ENCODE measurements at regions of chr2 and their contacts with region 1.

Region 1: DNA sequence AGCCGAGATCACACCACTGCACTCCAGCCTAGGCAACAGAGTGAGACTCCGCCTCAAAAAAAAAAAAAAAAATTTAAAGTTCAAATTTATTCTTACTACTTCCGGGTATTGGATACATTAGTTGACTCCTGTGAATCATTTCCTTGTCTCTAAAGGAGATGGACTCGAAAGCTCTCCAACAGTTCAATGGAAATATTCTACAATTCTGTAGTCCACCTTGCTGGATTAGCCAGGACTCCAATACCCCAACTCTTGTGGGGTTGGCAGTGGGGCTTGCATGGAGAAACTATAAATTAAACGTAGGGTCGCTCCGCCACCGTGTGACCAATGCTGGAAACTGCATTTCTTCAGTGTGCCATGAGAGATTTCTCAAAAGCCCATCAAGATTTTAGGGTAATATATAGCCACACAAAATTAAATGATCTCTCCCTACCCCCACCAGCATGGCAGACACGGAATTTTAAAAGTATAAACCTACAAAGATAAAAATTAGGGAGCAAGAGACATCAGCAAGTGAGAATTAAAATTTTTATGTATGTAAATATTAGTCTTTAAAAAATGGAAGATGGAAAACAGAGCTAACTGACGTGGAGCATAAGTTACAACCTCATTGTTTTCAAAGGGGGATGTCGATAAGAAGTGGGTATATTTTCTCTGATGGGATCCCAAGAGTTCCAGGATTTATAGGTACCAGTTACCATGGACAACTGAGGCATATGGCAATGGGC is 27.8 kb upstream of the GAREM2 start:
- DNase-seq: peak; percentile 13 to 76 (median 51)
- ATAC-seq: peak; percentile 53 to 78 (median 64)
- H3K4me3 ChIP-seq: no peak overlapping the region
- H3K4me3 Mint-ChIP-seq: no peak overlapping the region
- H3K27ac ChIP-seq: no peak overlapping the region
- H3K27ac Mint-ChIP-seq: no peak overlapping the region
- H3K4me1 ChIP-seq: no peaks in the 10 kb centered on the region
- H3K4me1 Mint-ChIP-seq: peaks cover 0 to 4% (median 2%) of the 10 kb centered on the region in 3 donors
- H3K27me3 ChIP-seq: peaks cover 0 to 12% of the 10 kb centered on the region in 2 experiments
- H3K27me3 Mint-ChIP-seq: peaks cover 10 to 11% of the 10 kb centered on the region in 2 donors

Region 2: GRCh38 chr2:26114151-26114550 is 31.0 kb before region 1 on chr2:
- CTCF ChIA-PET with region 1: no interaction called
- POLR2A ChIA-PET with region 1: no interaction called
- DNase-seq: no peak
- ATAC-seq: no peak
- H3K4me3 ChIP-seq: no peak overlapping the region
- H3K4me3 Mint-ChIP-seq: no peak overlapping the region
- H3K27ac ChIP-seq: no peak overlapping the region
- H3K27ac Mint-ChIP-seq: peak overlapping the region; percentile 28 to 48
- H3K4me1 ChIP-seq: no peaks in the 10 kb centered on the region
- H3K4me1 Mint-ChIP-seq: peaks cover 19 to 30% (median 21%) of the 10 kb centered on the region in 3 donors
- H3K27me3 ChIP-seq: no peaks in the 10 kb centered on the region
- H3K27me3 Mint-ChIP-seq: no peaks in the 10 kb centered on the region

Region 3: DNA sequence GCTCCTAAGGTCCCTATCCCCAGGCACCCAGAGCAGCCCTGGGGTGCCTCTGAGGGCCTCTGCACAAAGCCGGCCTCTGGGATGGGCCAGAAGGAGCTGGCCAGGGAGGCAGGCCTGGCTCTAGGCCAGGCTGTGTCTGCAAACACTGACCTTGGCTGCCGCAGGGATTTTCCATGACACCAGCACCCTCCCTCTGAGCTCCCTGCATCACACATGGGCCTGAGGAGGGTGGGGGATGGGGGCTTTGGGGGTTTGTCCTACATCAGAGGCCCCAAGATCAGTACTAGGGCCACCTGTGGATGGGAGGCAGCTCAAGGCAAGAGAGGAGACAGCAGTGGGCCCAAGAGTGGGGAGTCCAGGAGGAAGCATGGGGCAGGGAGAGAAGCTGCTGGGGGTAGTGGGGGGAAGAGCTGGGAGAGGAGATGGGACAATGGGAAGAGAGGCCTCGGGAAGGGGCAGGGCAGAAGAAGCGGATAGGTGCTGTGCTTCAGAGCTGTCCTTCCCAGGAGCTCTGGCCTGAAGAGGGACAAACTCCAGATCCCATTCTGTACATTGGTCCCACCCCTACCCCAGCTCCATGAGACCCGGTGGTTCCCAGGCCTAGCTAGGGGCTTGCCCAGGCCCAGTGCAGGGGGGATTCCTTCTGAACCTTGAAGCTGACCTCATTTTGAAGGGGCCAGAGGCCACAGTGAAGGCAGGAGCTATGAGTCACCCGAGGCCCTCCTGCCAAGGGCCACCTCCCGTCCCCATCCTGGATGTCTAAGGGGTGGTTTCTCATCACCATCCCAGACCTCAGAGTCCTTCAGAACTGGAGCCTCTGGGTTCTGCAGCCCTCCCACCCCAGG is 575.4 kb after region 1 on chr2:
- CTCF ChIA-PET with region 1: no interaction called
- POLR2A ChIA-PET with region 1: interaction called in 1 of 2 experiments, 10 read pairs
- DNase-seq: no peak
- ATAC-seq: no peak
- H3K4me3 ChIP-seq: no peak overlapping the region
- H3K4me3 Mint-ChIP-seq: no peak overlapping the region
- H3K27ac ChIP-seq: no peak overlapping the region
- H3K27ac Mint-ChIP-seq: no peak overlapping the region
- H3K4me1 ChIP-seq: no peaks in the 10 kb centered on the region
- H3K4me1 Mint-ChIP-seq: peaks cover 0 to 2% (median 0%) of the 10 kb centered on the region in 3 donors
- H3K27me3 ChIP-seq: peaks cover 0 to 16% of the 10 kb centered on the region in 2 experiments
- H3K27me3 Mint-ChIP-seq: peaks cover 0 to 3% of the 10 kb centered on the region in 2 donors

Region 4: DNA sequence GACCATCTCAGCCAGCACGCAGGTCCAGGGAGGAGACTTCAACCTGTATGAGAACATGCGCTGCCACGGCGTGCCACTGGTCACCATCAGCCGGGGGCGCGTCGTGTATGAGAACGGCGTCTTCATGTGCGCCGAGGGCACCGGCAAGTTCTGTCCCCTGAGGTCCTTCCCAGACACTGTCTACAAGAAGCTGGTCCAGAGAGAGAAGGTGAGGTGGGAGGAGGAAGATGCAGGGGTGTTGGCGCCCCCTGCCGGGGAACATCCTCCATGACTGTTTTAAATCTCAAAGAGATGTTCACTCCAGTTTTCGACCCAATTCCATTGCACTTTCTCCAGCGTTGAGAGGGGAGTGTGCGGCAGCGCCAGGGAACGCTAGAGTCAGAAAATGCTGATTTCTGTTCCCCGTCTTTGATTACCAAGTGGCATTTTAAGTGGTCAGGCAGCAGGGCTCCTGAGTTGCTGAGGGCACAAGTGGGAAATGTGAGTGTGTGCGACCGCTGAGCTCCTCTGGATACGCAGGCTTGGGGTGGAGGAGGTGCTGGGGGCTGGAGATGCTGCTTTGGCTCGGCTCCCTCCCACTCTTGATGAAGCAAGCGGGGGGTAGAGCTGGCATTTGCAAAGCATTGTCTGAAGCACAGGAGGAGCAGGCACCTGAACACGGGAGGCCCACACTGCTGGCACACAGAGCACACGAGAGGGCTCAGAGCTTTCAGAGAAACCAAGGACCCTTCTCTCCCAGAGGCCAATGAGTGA is 797.6 kb after region 1 on chr2:
- CTCF ChIA-PET with region 1: no interaction called
- POLR2A ChIA-PET with region 1: no interaction called
- DNase-seq: peak; percentile 15 to 72 (median 44)
- ATAC-seq: peak in 3 of 4 experiments; percentile 37 to 60 (median 40)
- H3K4me3 ChIP-seq: no peak overlapping the region
- H3K4me3 Mint-ChIP-seq: no peak overlapping the region
- H3K27ac ChIP-seq: no peak overlapping the region
- H3K27ac Mint-ChIP-seq: no peak overlapping the region
- H3K4me1 ChIP-seq: no peaks in the 10 kb centered on the region
- H3K4me1 Mint-ChIP-seq: peaks cover 2 to 6% (median 2%) of the 10 kb centered on the region in 3 donors
- H3K27me3 ChIP-seq: peaks cover 0 to 49% of the 10 kb centered on the region in 2 experiments
- H3K27me3 Mint-ChIP-seq: peaks cover 18 to 24% of the 10 kb centered on the region in 2 donors

Region 5: GRCh38 chr2:27537287-27537686 is 1392.2 kb after region 1 on chr2:
- CTCF ChIA-PET with region 1: no interaction called
- POLR2A ChIA-PET with region 1: no interaction called
- DNase-seq: no peak
- ATAC-seq: no peak
- H3K4me3 ChIP-seq: no peak overlapping the region
- H3K4me3 Mint-ChIP-seq: no peak overlapping the region
- H3K27ac ChIP-seq: no peak overlapping the region
- H3K27ac Mint-ChIP-seq: no peak overlapping the region
- H3K4me1 ChIP-seq: no peaks in the 10 kb centered on the region
- H3K4me1 Mint-ChIP-seq: no peaks in the 10 kb centered on the region
- H3K27me3 ChIP-seq: peaks cover 3 to 6% of the 10 kb centered on the region in 2 experiments
- H3K27me3 Mint-ChIP-seq: peaks cover 4 to 11% of the 10 kb centered on the region in 2 donors